Heart left ventricle (tissue), 16 donors: ENCODE measurements at regions of chr19 and their contacts with region 1.

Region 1: DNA sequence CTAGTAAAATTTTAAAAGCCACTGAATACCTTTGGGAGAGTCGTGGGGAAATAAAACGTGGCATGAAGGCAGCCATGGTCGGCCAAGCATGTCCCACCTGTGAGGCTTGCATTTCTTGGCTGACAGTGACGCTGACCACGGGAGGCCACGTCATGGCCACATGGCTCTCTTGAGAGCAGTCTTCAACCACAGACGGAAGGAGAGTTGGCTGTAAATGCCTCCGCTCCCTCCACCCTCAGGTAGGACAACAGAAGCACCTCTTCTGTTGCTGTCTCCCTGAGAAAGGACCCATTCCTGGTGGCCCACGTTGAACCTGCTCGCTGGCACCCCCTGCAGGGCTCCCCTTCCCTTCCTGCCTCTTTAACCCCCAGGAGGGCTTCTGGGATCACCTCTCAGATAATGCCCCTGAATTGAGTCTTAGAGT is 10.6 kb upstream of the LRRC25 start:
- DNase-seq: peak in 2 of 5 donors; percentile 41 to 44
- ATAC-seq: peak in 2 of 4 donors; percentile 22 to 30
- H3K4me3 ChIP-seq: no peak overlapping the region
- H3K27ac ChIP-seq: no peak overlapping the region
- H3K4me1 ChIP-seq: peaks cover 0 to 4% (median 0%) of the 10 kb centered on the region in 12 donors
- H3K27me3 ChIP-seq: no peaks in the 10 kb centered on the region
- CTCF ChIP-seq: peak; percentile 16 to 51 (median 40)
- POLR2A ChIP-seq: no peak

Region 2: DNA sequence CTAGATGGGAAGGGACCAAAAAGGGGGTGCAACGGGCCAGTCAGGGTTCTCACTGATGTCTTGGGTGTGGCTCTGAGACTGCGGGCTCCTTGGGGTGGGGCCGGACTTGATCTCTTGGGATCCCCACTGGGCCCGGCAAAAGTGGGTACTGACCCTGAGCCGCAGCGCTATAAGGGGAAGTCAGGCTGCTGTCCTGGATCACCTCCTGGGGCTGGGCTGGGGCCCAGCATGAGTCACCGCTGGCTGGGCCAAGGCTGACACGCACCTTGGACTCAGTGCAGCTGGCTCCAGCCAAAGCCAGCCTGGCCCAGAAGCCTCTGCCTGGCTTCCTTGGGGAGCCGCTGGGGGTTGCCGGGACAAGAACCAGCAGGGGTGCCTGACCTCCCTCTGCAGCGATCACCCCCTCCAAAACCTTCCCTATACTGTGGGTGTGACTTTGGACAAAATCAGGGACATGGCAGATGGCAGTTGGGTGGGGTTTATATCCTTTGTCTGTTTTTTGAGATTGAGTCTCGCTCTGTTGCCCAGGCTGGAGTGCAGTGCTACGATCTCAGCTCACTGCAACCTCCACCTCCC is 133.2 kb before region 1 on chr19:
- intact Hi-C with region 1: loop called in 5 of 10 experiments (anchors 2 to 10 kb)
- DNase-seq: peak; percentile 88 to 93 (median 92)
- ATAC-seq: peak; percentile 87 to 91 (median 89)
- H3K4me3 ChIP-seq: peak overlapping the region in 5 of 12 donors; percentile 0 to 23 (median 17)
- H3K27ac ChIP-seq: peak overlapping the region; percentile 50 to 87 (median 75)
- H3K4me1 ChIP-seq: peaks cover 11 to 59% (median 42%) of the 10 kb centered on the region in 12 donors
- H3K27me3 ChIP-seq: no peaks in the 10 kb centered on the region
- CTCF ChIP-seq: peak in 3 of 12 donors; percentile 13 to 23 (median 13)
- POLR2A ChIP-seq: peak in 1 of 2 donors; percentile 21

Region 3: GRCh38 chr19:18349524-18350128 is 58.4 kb before region 1 on chr19:
- intact Hi-C with region 1: loop called (anchors 1 to 5 kb)
- DNase-seq: peak in 4 of 5 donors; percentile 45 to 59 (median 46)
- ATAC-seq: peak in 2 of 4 donors; percentile 64 to 67
- H3K4me3 ChIP-seq: no peak overlapping the region
- H3K27ac ChIP-seq: no peak overlapping the region
- H3K4me1 ChIP-seq: peaks cover 0 to 3% (median 0%) of the 10 kb centered on the region in 12 donors
- H3K27me3 ChIP-seq: no peaks in the 10 kb centered on the region
- CTCF ChIP-seq: peak; percentile 63 to 83 (median 71)
- POLR2A ChIP-seq: no peak